ENCODE measurements at regions of chr15 and their contacts with region 1.

Region 1: GRCh38 chr15:73677146-73677607 is 7.0 kb upstream of the CD276 start:
- DNase-seq: peak; percentile 60
- H3K4me3 Mint-ChIP-seq: no peak overlapping the region
- H3K27ac Mint-ChIP-seq: no peak overlapping the region
- H3K4me1 Mint-ChIP-seq: peaks cover 2% of the 10 kb centered on the region
- H3K27me3 Mint-ChIP-seq: peaks cover 36% of the 10 kb centered on the region

Region 2: GRCh38 chr15:73608941-73609340 is 68.2 kb before region 1 on chr15:
- CTCF ChIA-PET with region 1: no interaction called
- POLR2A ChIA-PET with region 1: no interaction called
- DNase-seq: no peak
- H3K4me3 Mint-ChIP-seq: no peak overlapping the region
- H3K27ac Mint-ChIP-seq: no peak overlapping the region
- H3K4me1 Mint-ChIP-seq: peaks cover 27% of the 10 kb centered on the region
- H3K27me3 Mint-ChIP-seq: no peaks in the 10 kb centered on the region

Region 3: GRCh38 chr15:73704869-73705645 is 27.9 kb after region 1 on chr15:
- CTCF ChIA-PET with region 1: interaction called, 15 read pairs
- POLR2A ChIA-PET with region 1: no interaction called
- DNase-seq: peak; percentile 74
- H3K4me3 Mint-ChIP-seq: no peak overlapping the region
- H3K27ac Mint-ChIP-seq: no peak overlapping the region
- H3K4me1 Mint-ChIP-seq: peaks cover 4% of the 10 kb centered on the region
- H3K27me3 Mint-ChIP-seq: peaks cover 5% of the 10 kb centered on the region

Region 4: GRCh38 chr15:73746883-73747282 is 69.7 kb after region 1 on chr15:
- CTCF ChIA-PET with region 1: no interaction called
- POLR2A ChIA-PET with region 1: no interaction called
- DNase-seq: no peak
- H3K4me3 Mint-ChIP-seq: no peak overlapping the region
- H3K27ac Mint-ChIP-seq: no peak overlapping the region
- H3K4me1 Mint-ChIP-seq: no peaks in the 10 kb centered on the region
- H3K27me3 Mint-ChIP-seq: peaks cover 35% of the 10 kb centered on the region